Heart left ventricle (tissue), 16 donors: ENCODE measurements at regions of chr1 and their contacts with region 1.

Region 1: DNA sequence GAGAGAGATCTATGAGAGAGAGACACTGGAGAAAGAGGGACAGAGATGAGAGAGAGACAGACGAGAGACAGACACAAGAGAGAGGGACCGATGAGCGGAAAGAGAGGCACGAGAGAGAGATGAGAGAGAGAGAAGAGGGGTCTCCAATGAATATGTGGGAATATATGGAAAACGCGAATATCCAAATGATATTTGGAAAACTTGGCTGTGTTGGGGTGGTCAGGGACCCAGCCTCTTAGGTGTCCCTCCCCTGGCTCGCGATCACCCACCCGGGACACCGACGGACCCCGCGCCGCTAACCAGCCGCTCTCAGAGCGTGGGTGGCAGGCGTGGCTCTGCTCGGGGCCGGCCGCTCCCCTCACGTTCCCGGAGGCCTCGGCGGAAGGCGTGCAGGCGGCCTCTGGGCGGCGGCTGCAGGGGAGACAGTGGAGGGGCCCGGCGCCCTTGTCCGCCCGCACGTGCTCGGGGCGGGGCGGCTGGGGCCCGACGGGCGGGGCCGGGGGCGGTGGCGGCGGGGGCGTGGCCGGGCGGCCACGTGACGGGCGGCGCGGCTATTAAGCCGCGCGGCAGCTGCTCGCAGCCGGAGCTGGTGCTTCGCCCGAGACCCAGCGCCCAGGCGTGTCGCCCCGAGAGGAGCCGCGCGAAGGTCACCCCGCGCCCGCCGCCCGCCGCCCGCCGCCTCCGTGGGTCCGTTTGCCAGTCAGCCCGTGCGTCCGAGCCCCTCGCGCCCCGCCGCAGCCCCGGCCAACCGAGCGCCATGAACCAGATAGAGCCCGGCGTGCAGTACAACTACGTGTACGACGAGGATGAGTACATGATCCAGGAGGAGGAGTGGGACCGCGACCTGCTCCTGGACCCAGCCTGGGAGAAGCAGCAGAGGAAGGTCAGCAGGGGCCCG is at the start of gene ACTN2:
- DNase-seq: peak; percentile 65 to 87 (median 80)
- ATAC-seq: peak in 3 of 4 donors; percentile 36 to 72 (median 67)
- H3K4me3 ChIP-seq: peak within 1 kb of the TSS; percentile 56 to 87 (median 66)
- H3K27ac ChIP-seq: peak within 1 kb of the TSS; percentile 84 to 100 (median 97)
- H3K4me1 ChIP-seq: peaks cover 0 to 15% (median 7%) of the 10 kb centered on the region in 12 donors
- H3K27me3 ChIP-seq: peaks cover 0 to 33% (median 0%) of the 10 kb centered on the region in 9 donors
- CTCF ChIP-seq: no peak
- POLR2A ChIP-seq: peak; percentile 87 to 94
- total RNA-seq, gene ACTN2: 1,403 to 4,007 (median 2,928) TPM

Region 2: GRCh38 chr1:236603991-236604904 is 81.9 kb before region 1 on chr1 and contains the start of gene HEATR1:
- intact Hi-C with region 1: loop called in 1 of 10 experiments (anchors 5 kb)
- DNase-seq: peak; percentile 95 to 96 (median 95)
- ATAC-seq: peak; percentile 93 to 99 (median 98)
- H3K4me3 ChIP-seq: peak within 1 kb of the TSS; percentile 50 to 96 (median 80)
- H3K27ac ChIP-seq: peak within 1 kb of the TSS in 11 of 12 donors; percentile 71 to 90 (median 85)
- H3K4me1 ChIP-seq: peaks cover 0 to 23% (median 13%) of the 10 kb centered on the region in 12 donors
- H3K27me3 ChIP-seq: no peaks in the 10 kb centered on the region
- CTCF ChIP-seq: no peak
- POLR2A ChIP-seq: peak in 1 of 2 donors; percentile 55
- total RNA-seq, gene HEATR1: 6.6 to 17.2 (median 11.8) TPM

Region 3: DNA sequence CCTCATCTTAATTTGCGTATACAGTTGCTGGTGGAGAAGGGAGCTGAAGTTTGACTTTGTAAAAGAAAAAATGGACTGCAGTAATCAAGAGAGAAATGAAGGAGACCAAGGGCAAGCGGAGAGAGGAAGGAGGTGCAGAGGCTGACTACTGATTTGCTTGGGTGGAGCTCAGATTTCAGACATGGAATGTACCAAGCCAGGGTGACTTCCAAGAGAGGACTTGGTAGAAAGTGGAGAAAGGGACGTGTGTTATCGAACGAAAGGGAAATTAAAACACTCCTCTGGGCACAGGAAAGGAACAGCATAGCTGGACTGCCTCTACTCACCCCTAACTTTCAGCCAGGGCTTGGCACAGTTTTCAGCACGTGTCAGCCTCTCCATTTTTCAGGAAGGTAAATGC is 66.8 kb before region 1 on chr1:
- intact Hi-C with region 1: loop called in 4 of 10 experiments (anchors 2 to 5 kb)
- DNase-seq: no peak
- ATAC-seq: peak in 1 of 4 donors; percentile 30
- H3K4me3 ChIP-seq: no peak overlapping the region
- H3K27ac ChIP-seq: peak overlapping the region in 2 of 12 donors; percentile 24 to 28
- H3K4me1 ChIP-seq: peaks cover 0 to 7% (median 0%) of the 10 kb centered on the region in 12 donors
- H3K27me3 ChIP-seq: no peaks in the 10 kb centered on the region
- CTCF ChIP-seq: no peak
- POLR2A ChIP-seq: no peak

Region 4: GRCh38 chr1:236727521-236727920 is 41.4 kb after region 1 on chr1:
- intact Hi-C with region 1: loop called in 1 of 10 experiments (anchors 5 kb)
- DNase-seq: peak in 2 of 5 donors; percentile 66 to 74
- ATAC-seq: peak; percentile 62 to 87 (median 68)
- H3K4me3 ChIP-seq: no peak overlapping the region
- H3K27ac ChIP-seq: peak overlapping the region in 6 of 12 donors; percentile 3 to 64 (median 44)
- H3K4me1 ChIP-seq: peaks cover 0 to 50% (median 9%) of the 10 kb centered on the region in 12 donors
- H3K27me3 ChIP-seq: no peaks in the 10 kb centered on the region
- CTCF ChIP-seq: no peak
- POLR2A ChIP-seq: no peak

Region 5: GRCh38 chr1:236748471-236748870 is 62.3 kb after region 1 on chr1:
- intact Hi-C with region 1: loop called in 1 of 10 experiments (anchors 5 kb)
- DNase-seq: no peak
- ATAC-seq: no peak
- H3K4me3 ChIP-seq: no peak overlapping the region
- H3K27ac ChIP-seq: peak overlapping the region in 11 of 12 donors; percentile 52 to 87 (median 81)
- H3K4me1 ChIP-seq: peaks cover 0 to 67% (median 14%) of the 10 kb centered on the region in 12 donors
- H3K27me3 ChIP-seq: no peaks in the 10 kb centered on the region
- CTCF ChIP-seq: peak in 2 of 12 donors; percentile 13 to 21
- POLR2A ChIP-seq: no peak

Region 6: DNA sequence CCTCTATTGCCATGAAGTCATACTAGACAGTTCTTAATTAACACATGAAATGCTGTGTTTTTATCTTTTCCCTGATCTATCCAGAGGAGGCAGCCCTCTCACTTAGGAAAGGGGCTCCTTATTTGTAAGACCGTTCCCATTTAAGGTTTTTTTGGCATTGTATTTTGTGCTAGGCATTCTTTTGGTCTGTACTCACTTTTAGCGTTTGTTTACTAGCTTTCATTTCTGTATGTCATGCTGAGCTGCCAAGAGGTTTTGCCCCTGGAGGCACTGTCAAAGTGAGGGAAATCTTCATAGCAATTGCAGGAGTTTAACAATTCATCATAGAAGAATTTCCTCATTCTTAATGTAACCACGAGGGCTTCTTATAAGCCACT is 168.4 kb after region 1 on chr1:
- intact Hi-C with region 1: no loop called
- DNase-seq: no peak
- ATAC-seq: no peak
- H3K4me3 ChIP-seq: no peak overlapping the region
- H3K27ac ChIP-seq: no peak overlapping the region
- H3K4me1 ChIP-seq: peaks cover 0 to 10% (median 0%) of the 10 kb centered on the region in 12 donors
- H3K27me3 ChIP-seq: no peaks in the 10 kb centered on the region
- CTCF ChIP-seq: no peak
- POLR2A ChIP-seq: no peak

Region 7: GRCh38 chr1:236893626-236894545 is 207.7 kb after region 1 on chr1:
- intact Hi-C with region 1: loop called in 1 of 10 experiments (anchors 5 kb)
- DNase-seq: peak in 2 of 5 donors; percentile 18 to 40
- ATAC-seq: no peak
- H3K4me3 ChIP-seq: no peak overlapping the region
- H3K27ac ChIP-seq: peak overlapping the region in 9 of 12 donors; percentile 54 to 92 (median 82)
- H3K4me1 ChIP-seq: peaks cover 0 to 73% (median 29%) of the 10 kb centered on the region in 12 donors
- H3K27me3 ChIP-seq: no peaks in the 10 kb centered on the region
- CTCF ChIP-seq: no peak
- POLR2A ChIP-seq: no peak